ENCODE measurements at regions of chr2 and their contacts with region 1.

Region 1: DNA sequence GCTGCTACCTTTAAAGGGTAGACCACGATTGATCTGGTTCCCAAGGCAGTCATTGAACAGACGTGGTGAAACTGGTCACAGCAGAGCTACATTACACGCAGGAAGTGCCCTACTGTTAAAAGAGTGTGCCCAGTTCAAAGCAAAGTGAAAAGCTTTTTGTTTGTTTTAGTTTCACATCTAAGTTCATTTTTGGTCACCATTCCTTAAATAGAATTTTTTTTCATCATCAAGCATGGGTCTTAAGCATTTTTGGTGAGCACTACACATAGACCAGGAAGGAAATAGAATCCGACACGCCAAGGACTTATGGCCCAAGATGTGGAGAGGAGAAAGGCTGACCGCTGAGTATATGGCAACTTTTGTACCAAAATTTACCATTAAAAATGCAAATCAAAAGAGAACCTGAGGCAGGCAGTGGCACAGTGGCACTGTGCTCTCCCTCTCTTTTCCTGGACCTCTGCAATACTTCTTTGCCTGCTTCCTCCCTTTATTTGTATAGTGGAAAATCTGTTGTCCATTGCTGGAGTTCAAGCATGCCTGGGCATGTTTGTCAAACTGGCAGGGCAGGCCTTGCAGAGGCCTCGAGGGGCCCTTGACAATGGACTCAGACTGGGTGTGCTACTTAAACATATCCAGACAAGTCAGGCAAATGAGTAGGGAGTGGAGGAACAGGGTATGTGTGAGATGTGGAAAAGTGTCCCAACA is 42.6 kb upstream of the HNRNPA3 start:
- DNase-seq: peak; percentile 97
- H3K4me3 ChIP-seq: no peak overlapping the region
- H3K27ac ChIP-seq: peak overlapping the region; percentile 93
- H3K4me1 ChIP-seq: peaks cover 60% of the 10 kb centered on the region
- H3K27me3 ChIP-seq: no peaks in the 10 kb centered on the region
- CTCF ChIP-seq: no peak

Region 2: GRCh38 chr2:177124371-177124770 is 45.6 kb before region 1 on chr2:
- CTCF ChIA-PET with region 1: no interaction called
- dilution Hi-C with region 1: no loop called
- in situ Hi-C with region 1: no loop called
- intact Hi-C with region 1: no loop called
- DNase-seq: peak; percentile 32
- H3K4me3 ChIP-seq: no peak overlapping the region
- H3K27ac ChIP-seq: no peak overlapping the region
- H3K4me1 ChIP-seq: no peaks in the 10 kb centered on the region
- H3K27me3 ChIP-seq: no peaks in the 10 kb centered on the region
- CTCF ChIP-seq: no peak

Region 3: GRCh38 chr2:177212106-177212890 is 42.3 kb after region 1 on chr2 and contains the start of gene HNRNPA3:
- CTCF ChIA-PET with region 1: interaction called, 3 read pairs
- dilution Hi-C with region 1: loop called (anchors 10 kb)
- in situ Hi-C with region 1: loop called in 1 of 2 experiments (anchors 5 kb)
- intact Hi-C with region 1: loop called (anchors 1 kb)
- DNase-seq: peak; percentile 99
- H3K4me3 ChIP-seq: peak within 1 kb of the TSS; percentile 81 to 100 (median 97)
- H3K27ac ChIP-seq: peak within 1 kb of the TSS; percentile 99
- H3K4me1 ChIP-seq: peaks cover 20% of the 10 kb centered on the region
- H3K27me3 ChIP-seq: no peaks in the 10 kb centered on the region
- CTCF ChIP-seq: peak in 1 of 2 donors; percentile 18
- total RNA-seq, gene HNRNPA3: 18.2 to 196 TPM

Region 4: GRCh38 chr2:177552422-177553175 is 382.6 kb after region 1 on chr2:
- CTCF ChIA-PET with region 1: no interaction called
- dilution Hi-C with region 1: no loop called
- in situ Hi-C with region 1: no loop called
- intact Hi-C with region 1: loop called (anchors 5 kb)
- DNase-seq: peak; percentile 85
- H3K4me3 ChIP-seq: peak overlapping the region; percentile 65 to 74 (median 71)
- H3K27ac ChIP-seq: peak overlapping the region; percentile 100
- H3K4me1 ChIP-seq: no peaks in the 10 kb centered on the region
- H3K27me3 ChIP-seq: no peaks in the 10 kb centered on the region
- CTCF ChIP-seq: no peak